Naive thymus-derived CD4-positive, alpha-beta T cell (primary cell): ENCODE measurements at regions of chr5 and their contacts with region 1.

Region 1: GRCh38 chr5:57173185-57174127 is at the start of gene GPBP1:
- DNase-seq: peak; percentile 94 to 99 (median 98)
- ATAC-seq: peak; percentile 88
- H3K4me3 ChIP-seq: peak within 1 kb of the TSS; percentile 95
- H3K4me3 Mint-ChIP-seq: peak within 1 kb of the TSS; percentile 89 to 100 (median 97)
- H3K27ac ChIP-seq: peak within 1 kb of the TSS; percentile 99
- H3K27ac Mint-ChIP-seq: peak within 1 kb of the TSS; percentile 92 to 100 (median 98)
- H3K4me1 ChIP-seq: peaks cover 4 to 8% of the 10 kb centered on the region in 2 donors
- H3K4me1 Mint-ChIP-seq: peaks cover 23 to 38% (median 29%) of the 10 kb centered on the region in 7 donors
- H3K27me3 ChIP-seq: no peaks in the 10 kb centered on the region
- H3K27me3 Mint-ChIP-seq: no peaks in the 10 kb centered on the region
- total RNA-seq, gene GPBP1: 99.2 to 149 (median 116) TPM

Region 2: DNA sequence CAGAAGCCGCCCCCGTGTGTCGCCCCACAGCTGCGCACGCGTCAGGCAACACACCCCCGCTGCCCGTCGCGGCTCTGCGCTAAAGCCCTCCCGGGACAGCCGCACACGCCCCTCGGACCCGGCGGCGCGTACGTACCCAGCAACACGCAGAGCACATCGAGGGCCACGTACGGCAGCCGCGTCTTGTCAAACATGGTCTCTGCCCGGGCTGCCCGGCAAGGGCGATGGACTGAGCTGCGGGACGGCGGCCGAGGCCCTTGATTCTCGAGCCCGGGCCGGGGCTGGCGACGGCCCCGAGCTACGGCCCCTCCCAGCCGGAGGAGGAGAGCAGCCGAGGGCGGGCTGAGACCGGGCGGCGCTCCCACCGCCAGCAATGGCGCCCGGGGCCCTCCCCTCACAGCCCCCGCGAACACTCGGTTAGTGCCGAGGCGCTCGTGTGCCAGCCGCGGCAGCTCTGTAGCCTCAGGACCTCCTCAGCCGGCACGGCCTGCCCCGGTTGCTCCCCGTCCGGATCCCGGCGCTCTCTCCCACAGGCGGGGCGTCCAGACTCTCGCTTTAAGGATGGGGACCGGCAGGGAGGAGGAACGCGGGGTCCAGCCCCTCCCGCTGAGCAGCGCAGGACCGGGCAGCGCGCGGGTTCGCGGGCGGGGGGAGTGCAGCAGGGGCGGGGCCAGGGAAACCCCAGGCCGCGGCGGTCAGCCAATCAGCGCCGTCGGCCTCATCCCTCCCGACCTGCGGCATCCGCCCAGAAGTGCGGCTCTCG is 1638.8 kb before region 1 on chr5 and contains the start of gene PLPP1:
- CTCF ChIA-PET with region 1: no interaction called
- POLR2A ChIA-PET with region 1: no interaction called
- intact Hi-C with region 1: loop called (anchors 5 to 10 kb)
- DNase-seq: peak; percentile 74 to 91 (median 86)
- ATAC-seq: peak; percentile 91
- H3K4me3 ChIP-seq: peak within 1 kb of the TSS; percentile 83
- H3K4me3 Mint-ChIP-seq: peak within 1 kb of the TSS; percentile 86 to 97 (median 94)
- H3K27ac ChIP-seq: peak within 1 kb of the TSS; percentile 91
- H3K27ac Mint-ChIP-seq: peak within 1 kb of the TSS; percentile 79 to 96 (median 91)
- H3K4me1 ChIP-seq: peaks cover 6 to 26% of the 10 kb centered on the region in 2 donors
- H3K4me1 Mint-ChIP-seq: peaks cover 20 to 61% (median 50%) of the 10 kb centered on the region in 7 donors
- H3K27me3 ChIP-seq: no peaks in the 10 kb centered on the region
- H3K27me3 Mint-ChIP-seq: no peaks in the 10 kb centered on the region
- total RNA-seq, gene PLPP1: 8.0 to 31.3 (median 8.4) TPM

Region 3: GRCh38 chr5:56148453-56148971 is 1024.9 kb before region 1 on chr5:
- CTCF ChIA-PET with region 1: no interaction called
- POLR2A ChIA-PET with region 1: no interaction called
- intact Hi-C with region 1: loop called (anchors 5 to 10 kb)
- DNase-seq: peak in 8 of 9 donors; percentile 52 to 84 (median 70)
- ATAC-seq: peak; percentile 87
- H3K4me3 ChIP-seq: peak overlapping the region; percentile 18
- H3K4me3 Mint-ChIP-seq: peak overlapping the region; percentile 45 to 74 (median 62)
- H3K27ac ChIP-seq: peak overlapping the region; percentile 61
- H3K27ac Mint-ChIP-seq: peak overlapping the region; percentile 87 to 97 (median 94)
- H3K4me1 ChIP-seq: peaks cover 0 to 76% of the 10 kb centered on the region in 2 donors
- H3K4me1 Mint-ChIP-seq: peaks cover 39 to 76% (median 70%) of the 10 kb centered on the region in 7 donors
- H3K27me3 ChIP-seq: no peaks in the 10 kb centered on the region
- H3K27me3 Mint-ChIP-seq: peaks cover 0 to 2% (median 0%) of the 10 kb centered on the region in 5 donors

Region 4: GRCh38 chr5:56686337-56687195 is 486.9 kb before region 1 on chr5:
- CTCF ChIA-PET with region 1: no interaction called
- POLR2A ChIA-PET with region 1: no interaction called
- intact Hi-C with region 1: loop called in 1 of 2 experiments (anchors 5 kb)
- DNase-seq: peak in 5 of 9 donors; percentile 28 to 56 (median 42)
- ATAC-seq: peak; percentile 60
- H3K4me3 ChIP-seq: no peak overlapping the region
- H3K4me3 Mint-ChIP-seq: peak overlapping the region in 9 of 10 donors; percentile 6 to 66 (median 40)
- H3K27ac ChIP-seq: peak overlapping the region; percentile 30
- H3K27ac Mint-ChIP-seq: peak overlapping the region; percentile 22 to 98 (median 79)
- H3K4me1 ChIP-seq: peaks cover 19 to 75% of the 10 kb centered on the region in 2 donors
- H3K4me1 Mint-ChIP-seq: peaks cover 49 to 88% (median 85%) of the 10 kb centered on the region in 7 donors
- H3K27me3 ChIP-seq: no peaks in the 10 kb centered on the region
- H3K27me3 Mint-ChIP-seq: no peaks in the 10 kb centered on the region

Region 5: DNA sequence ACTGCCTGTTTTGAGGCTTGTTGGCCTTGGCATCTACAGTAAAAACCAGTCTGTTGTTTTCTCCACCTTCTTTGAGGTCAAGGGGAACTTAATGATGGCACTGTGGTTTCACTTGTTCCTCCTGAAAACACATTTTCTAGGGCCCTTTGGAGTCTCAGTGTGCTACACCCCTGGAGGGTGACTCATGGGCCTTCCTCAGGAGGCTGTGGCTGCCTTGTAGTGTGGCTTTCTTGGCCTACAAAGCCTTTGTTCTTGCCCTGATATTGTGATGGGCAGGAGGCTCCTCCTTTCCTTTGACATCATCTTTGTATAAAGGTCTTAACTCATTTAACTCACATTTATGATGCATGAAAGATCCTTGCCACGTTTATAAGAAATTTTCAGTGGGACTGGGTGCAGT is 55.9 kb before region 1 on chr5:
- CTCF ChIA-PET with region 1: no interaction called
- POLR2A ChIA-PET with region 1: no interaction called
- intact Hi-C with region 1: loop called (anchors 2 kb)
- DNase-seq: peak in 7 of 9 donors; percentile 5 to 66 (median 25)
- ATAC-seq: peak; percentile 91
- H3K4me3 ChIP-seq: no peak overlapping the region
- H3K4me3 Mint-ChIP-seq: peak overlapping the region in 2 of 10 donors; percentile 7 to 65
- H3K27ac ChIP-seq: no peak overlapping the region
- H3K27ac Mint-ChIP-seq: peak overlapping the region in 6 of 9 donors; percentile 38 to 88 (median 56)
- H3K4me1 ChIP-seq: no peaks in the 10 kb centered on the region
- H3K4me1 Mint-ChIP-seq: peaks cover 0 to 27% (median 0%) of the 10 kb centered on the region in 7 donors
- H3K27me3 ChIP-seq: no peaks in the 10 kb centered on the region
- H3K27me3 Mint-ChIP-seq: peaks cover 0 to 3% (median 0%) of the 10 kb centered on the region in 5 donors

Region 6: DNA sequence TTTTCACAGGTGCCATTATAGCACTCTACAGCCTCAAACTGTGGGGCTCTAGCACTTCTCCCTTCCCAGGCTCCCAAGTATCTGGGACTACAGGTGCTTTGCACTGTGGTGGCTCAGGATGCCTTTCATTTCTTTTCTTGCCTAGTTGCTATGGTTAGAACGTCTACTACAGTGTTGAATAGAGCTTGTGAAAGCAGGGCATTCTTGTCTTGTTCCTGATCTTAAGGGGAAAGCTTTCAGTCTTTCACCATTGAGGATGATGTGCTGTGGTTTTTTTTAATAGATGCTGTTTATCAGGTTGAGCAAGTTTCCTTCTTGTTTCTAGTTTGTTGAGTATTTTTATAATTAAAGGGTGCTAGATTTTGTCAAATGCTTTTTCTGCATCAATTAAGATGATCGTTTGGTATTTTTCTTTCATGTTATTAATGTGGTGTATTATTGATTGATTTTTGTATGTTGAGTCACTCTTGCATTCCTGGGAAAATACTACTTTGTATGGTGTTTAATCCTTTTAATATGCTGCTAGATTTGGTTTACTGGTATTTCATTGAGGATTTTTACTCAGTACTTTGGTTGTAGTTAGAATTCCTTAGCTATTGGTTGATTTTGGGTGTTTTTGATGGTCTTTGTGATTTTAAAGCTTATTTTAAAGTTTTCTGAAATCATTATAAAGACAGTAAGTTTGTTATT is 36.0 kb after region 1 on chr5:
- CTCF ChIA-PET with region 1: no interaction called
- POLR2A ChIA-PET with region 1: no interaction called
- intact Hi-C with region 1: loop called (anchors 2 to 5 kb)
- DNase-seq: no peak
- ATAC-seq: peak; percentile 49
- H3K4me3 ChIP-seq: no peak overlapping the region
- H3K4me3 Mint-ChIP-seq: peak overlapping the region in 8 of 10 donors; percentile 14 to 65 (median 43)
- H3K27ac ChIP-seq: peak overlapping the region; percentile 49
- H3K27ac Mint-ChIP-seq: peak overlapping the region in 8 of 9 donors; percentile 42 to 84 (median 73)
- H3K4me1 ChIP-seq: peaks cover 15 to 30% of the 10 kb centered on the region in 2 donors
- H3K4me1 Mint-ChIP-seq: peaks cover 45 to 88% (median 72%) of the 10 kb centered on the region in 7 donors
- H3K27me3 ChIP-seq: no peaks in the 10 kb centered on the region
- H3K27me3 Mint-ChIP-seq: no peaks in the 10 kb centered on the region

Region 7: GRCh38 chr5:59039296-59040023 is 1866.0 kb after region 1 on chr5:
- CTCF ChIA-PET with region 1: no interaction called
- POLR2A ChIA-PET with region 1: no interaction called
- intact Hi-C with region 1: loop called in 1 of 2 experiments (anchors 10 kb)
- DNase-seq: peak; percentile 81 to 94 (median 93)
- ATAC-seq: peak; percentile 87
- H3K4me3 ChIP-seq: peak overlapping the region; percentile 51
- H3K4me3 Mint-ChIP-seq: peak overlapping the region; percentile 83 to 98 (median 96)
- H3K27ac ChIP-seq: peak overlapping the region; percentile 86
- H3K27ac Mint-ChIP-seq: peak overlapping the region; percentile 97 to 100 (median 99)
- H3K4me1 ChIP-seq: peaks cover 16 to 33% of the 10 kb centered on the region in 2 donors
- H3K4me1 Mint-ChIP-seq: peaks cover 30 to 62% (median 56%) of the 10 kb centered on the region in 7 donors
- H3K27me3 ChIP-seq: no peaks in the 10 kb centered on the region
- H3K27me3 Mint-ChIP-seq: no peaks in the 10 kb centered on the region